ENCODE measurements at regions of chr12 and their contacts with region 1.

Region 1: DNA sequence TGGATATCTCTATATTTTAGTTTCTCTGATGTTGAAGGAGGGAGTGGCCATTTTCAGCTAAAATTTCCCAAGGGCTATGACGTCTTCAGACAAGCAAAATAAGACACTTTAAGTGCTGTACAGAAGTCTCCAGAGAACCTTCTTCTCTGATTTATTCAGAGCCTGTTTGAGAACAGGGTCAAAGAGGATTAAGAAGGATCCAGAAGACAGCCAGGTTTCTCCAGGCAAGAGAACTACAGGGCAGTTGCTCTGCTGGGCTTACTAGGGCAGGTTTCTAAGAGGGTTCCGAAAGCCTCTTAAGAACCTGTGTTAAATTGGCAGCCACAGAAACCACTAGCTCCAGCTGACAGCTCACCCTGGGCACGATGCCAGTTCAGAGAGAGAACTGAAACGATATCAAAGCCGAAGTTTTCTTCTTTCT is 1.2 kb downstream of the MGP start:
- DNase-seq: peak; percentile 68 to 93 (median 82)
- ATAC-seq: peak; percentile 91
- H3K4me3 ChIP-seq: peak overlapping the region; percentile 7
- H3K4me3 Mint-ChIP-seq: peak overlapping the region; percentile 75
- H3K27ac ChIP-seq: no peak overlapping the region
- H3K27ac Mint-ChIP-seq: peak overlapping the region; percentile 86
- H3K4me1 ChIP-seq: peaks cover 11% of the 10 kb centered on the region
- H3K4me1 Mint-ChIP-seq: peaks cover 47% of the 10 kb centered on the region
- H3K27me3 ChIP-seq: no peaks in the 10 kb centered on the region
- H3K27me3 Mint-ChIP-seq: no peaks in the 10 kb centered on the region
- CTCF ChIP-seq: no peak

Region 2: DNA sequence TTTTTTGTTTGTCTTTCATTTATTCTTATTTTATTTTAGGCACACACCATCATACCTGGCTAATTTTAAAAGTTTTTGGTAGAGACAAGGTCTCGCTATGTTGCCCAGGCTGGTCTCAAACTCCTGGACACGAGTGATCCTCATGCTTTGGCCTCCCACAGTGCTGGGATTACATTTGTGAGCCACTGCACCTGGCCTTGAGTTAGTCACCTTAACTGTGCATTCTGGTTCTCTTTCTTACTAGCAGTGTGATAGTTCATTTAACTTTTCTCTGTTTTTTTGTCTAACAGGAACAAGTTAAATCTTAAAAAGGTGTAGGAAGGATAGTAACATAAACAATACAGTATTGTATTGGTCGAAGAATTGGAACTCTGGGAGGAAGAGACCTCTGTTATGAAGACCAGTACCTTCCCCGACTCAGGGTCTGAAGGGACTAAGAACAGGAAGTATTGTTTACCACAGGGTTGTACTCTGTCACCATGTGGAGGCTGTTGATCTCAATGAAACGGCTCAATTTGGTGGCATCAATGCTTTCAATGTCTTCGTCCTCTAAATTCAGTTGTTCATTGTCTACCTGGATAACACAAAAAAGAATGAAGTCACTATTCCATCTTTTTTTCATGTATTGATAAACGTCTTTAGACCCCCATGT is 36.1 kb after region 1 on chr12:
- CTCF ChIA-PET with region 1: no interaction called
- POLR2A ChIA-PET with region 1: no interaction called
- intact Hi-C with region 1: loop called in 1 of 2 experiments (anchors 5 kb)
- DNase-seq: peak in 4 of 14 experiments; percentile 20 to 35 (median 24)
- ATAC-seq: peak; percentile 44
- H3K4me3 ChIP-seq: no peak overlapping the region
- H3K4me3 Mint-ChIP-seq: peak overlapping the region; percentile 20
- H3K27ac ChIP-seq: no peak overlapping the region
- H3K27ac Mint-ChIP-seq: peak overlapping the region; percentile 76
- H3K4me1 ChIP-seq: peaks cover 15% of the 10 kb centered on the region
- H3K4me1 Mint-ChIP-seq: peaks cover 27% of the 10 kb centered on the region
- H3K27me3 ChIP-seq: no peaks in the 10 kb centered on the region
- H3K27me3 Mint-ChIP-seq: no peaks in the 10 kb centered on the region
- CTCF ChIP-seq: no peak

Region 3: GRCh38 chr12:15013634-15014179 is 129.2 kb after region 1 on chr12:
- CTCF ChIA-PET with region 1: no interaction called
- POLR2A ChIA-PET with region 1: no interaction called
- intact Hi-C with region 1: no loop called
- DNase-seq: no peak
- ATAC-seq: no peak
- H3K4me3 ChIP-seq: no peak overlapping the region
- H3K4me3 Mint-ChIP-seq: no peak overlapping the region
- H3K27ac ChIP-seq: no peak overlapping the region
- H3K27ac Mint-ChIP-seq: no peak overlapping the region
- H3K4me1 ChIP-seq: peaks cover 3% of the 10 kb centered on the region
- H3K4me1 Mint-ChIP-seq: no peaks in the 10 kb centered on the region
- H3K27me3 ChIP-seq: no peaks in the 10 kb centered on the region
- H3K27me3 Mint-ChIP-seq: peaks cover 6% of the 10 kb centered on the region
- CTCF ChIP-seq: no peak

Measured in CD4-positive, alpha-beta T cell (primary cell).